Motor neuron (in vitro differentiated cells): ENCODE measurements at regions of chr5 and their contacts with region 1.

Region 1: DNA sequence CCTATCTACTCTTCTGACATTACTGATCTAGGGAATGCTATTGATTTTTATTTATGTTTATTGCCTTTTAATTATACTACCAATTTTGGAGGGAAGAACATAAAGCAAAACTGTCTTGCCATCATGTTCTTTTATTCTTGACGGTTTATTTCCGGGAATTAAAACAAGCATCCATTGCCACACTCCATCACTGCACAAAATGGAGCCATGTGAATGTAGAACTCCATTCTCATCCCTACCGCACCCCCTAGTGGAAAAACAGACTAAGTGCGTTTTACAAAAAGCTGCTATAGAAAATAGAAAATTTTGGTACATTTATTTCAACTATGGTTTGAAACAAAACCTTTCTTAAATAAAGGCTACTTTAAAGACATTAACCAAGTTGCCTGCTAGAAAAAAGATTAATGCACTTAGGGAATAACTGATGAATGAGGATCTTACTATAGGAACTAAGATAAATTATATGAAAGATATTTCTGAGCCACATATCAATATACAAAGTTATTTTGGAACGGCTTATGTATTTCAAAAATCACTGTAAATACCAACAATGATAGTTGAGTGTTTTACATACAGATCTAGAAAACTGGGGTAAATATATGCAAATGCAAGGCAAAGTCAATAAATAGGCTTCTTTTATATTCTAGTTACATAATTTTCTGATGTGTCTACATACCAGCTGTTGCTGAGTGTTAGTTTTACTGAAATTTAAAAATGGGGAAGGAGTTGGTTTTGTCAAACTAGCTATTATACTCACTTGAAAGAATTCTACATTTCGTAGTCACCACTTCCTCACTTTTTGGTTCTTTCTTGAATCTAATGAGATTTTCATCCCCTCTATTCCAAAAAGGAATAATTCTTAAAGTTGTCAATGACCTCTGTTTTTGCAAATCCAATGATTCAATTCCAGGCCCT is 26.5 kb downstream of the OXCT1 start:
- ATAC-seq: peak in 6 of 8 experiments; percentile 36 to 65 (median 54)
- H3K4me3 ChIP-seq: no peak overlapping the region
- H3K27ac ChIP-seq: no peak overlapping the region
- H3K4me1 ChIP-seq: no peaks in the 10 kb centered on the region

Region 2: GRCh38 chr5:41182666-41183065 is 661.0 kb before region 1 on chr5:
- in situ Hi-C with region 1: no loop called
- ATAC-seq: no peak
- H3K4me3 ChIP-seq: no peak overlapping the region
- H3K27ac ChIP-seq: no peak overlapping the region
- H3K4me1 ChIP-seq: no peaks in the 10 kb centered on the region

Region 3: DNA sequence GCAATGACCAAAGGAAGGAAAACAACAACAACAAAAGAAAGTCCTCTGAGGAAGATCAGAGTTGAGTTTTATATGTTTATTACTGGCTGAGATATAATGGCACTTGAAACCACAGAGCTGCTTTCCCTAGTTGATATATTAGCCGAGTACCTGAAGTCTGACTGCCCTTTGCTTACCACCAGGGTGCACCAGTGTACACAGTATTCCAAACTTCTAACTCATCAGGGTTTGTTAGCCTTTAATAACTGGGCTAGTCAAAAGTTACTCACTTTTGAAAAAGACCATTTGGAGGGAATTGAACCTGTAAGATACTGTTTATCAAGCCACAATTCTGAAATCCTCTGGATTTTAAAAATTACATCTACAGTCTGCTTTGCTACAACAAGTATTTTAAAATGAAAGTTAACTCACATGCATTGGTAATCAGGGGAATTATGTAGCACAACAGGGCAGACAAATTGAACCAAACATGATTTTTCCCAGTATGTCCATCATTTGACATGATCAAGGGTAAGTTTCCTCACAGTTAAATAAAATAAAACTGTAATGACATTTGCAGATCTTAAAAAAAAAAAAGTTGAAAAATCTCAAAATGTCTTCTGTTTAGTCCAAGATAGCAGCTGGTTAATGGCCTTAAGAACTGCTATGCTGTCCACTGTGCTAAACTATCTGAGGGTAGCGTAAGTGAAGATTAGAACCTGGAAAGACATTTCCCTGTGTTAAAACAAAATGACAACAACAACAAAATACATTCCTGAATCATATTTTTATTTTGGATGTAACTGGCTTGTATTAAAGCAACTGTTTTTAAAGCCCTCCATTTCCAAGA is 573.1 kb before region 1 on chr5:
- in situ Hi-C with region 1: loop called in 1 of 9 experiments (anchors 25 kb)
- ATAC-seq: peak; percentile 53 to 89 (median 78)
- H3K4me3 ChIP-seq: no peak overlapping the region
- H3K27ac ChIP-seq: no peak overlapping the region
- H3K4me1 ChIP-seq: no peaks in the 10 kb centered on the region

Region 4: GRCh38 chr5:41707853-41708603 is 135.7 kb before region 1 on chr5:
- in situ Hi-C with region 1: loop called in 3 of 9 experiments (anchors 5 to 25 kb)
- ATAC-seq: peak in 4 of 8 experiments; percentile 38 to 96 (median 90)
- H3K4me3 ChIP-seq: no peak overlapping the region
- H3K27ac ChIP-seq: no peak overlapping the region
- H3K4me1 ChIP-seq: no peaks in the 10 kb centered on the region

Region 5: GRCh38 chr5:42005561-42006153 is 161.9 kb after region 1 on chr5:
- in situ Hi-C with region 1: no loop called
- ATAC-seq: peak in 3 of 8 experiments; percentile 34 to 49 (median 38)
- H3K4me3 ChIP-seq: no peak overlapping the region
- H3K27ac ChIP-seq: no peak overlapping the region
- H3K4me1 ChIP-seq: no peaks in the 10 kb centered on the region